B cell (primary cell): ENCODE measurements at regions of chr22 and their contacts with region 1.

Region 1: DNA sequence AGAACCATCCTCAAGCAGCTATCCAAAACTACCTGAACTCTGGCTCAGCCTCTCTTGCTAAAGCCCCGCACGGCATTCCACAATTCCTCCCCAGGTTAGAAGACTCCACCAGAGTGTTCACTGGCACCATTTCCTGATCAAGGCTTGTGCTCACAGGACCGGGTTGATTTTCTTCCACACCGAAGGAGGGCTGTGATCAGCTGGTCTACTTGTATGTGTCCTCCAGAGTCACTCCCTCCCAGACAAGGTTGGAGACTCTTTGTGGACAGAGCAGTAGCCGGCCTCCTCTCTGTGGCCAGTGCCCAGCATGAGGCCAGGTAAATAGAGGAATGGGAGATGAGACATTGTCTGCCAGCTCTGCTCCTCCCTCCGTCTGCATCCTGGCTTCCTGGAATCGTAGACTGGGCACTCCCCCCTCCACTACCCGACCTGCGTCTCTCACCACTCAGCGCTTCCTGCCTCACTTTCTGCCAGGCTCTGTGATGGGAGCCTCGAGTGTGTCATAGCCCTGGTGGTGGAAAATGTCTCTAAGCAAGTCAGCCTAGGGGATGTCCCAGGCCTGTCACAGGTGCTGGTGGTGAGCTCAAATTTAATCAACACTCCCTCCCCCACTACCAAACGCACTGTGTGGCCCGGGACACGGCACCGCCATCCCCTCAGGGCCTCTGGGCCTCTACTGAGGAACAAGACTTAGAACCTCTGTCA is 12.5 kb upstream of the TMPRSS6 start:
- DNase-seq: peak; percentile 88
- ATAC-seq: peak; percentile 92
- H3K4me3 ChIP-seq: peak overlapping the region in 1 of 5 experiments; percentile 33
- H3K4me3 Mint-ChIP-seq: peak overlapping the region; percentile 86
- H3K27ac ChIP-seq: peak overlapping the region; percentile 39 to 69
- H3K27ac Mint-ChIP-seq: peak overlapping the region; percentile 98
- H3K4me1 ChIP-seq: peaks cover 14 to 24% of the 10 kb centered on the region in 2 donors
- H3K4me1 Mint-ChIP-seq: peaks cover 29% of the 10 kb centered on the region
- H3K27me3 ChIP-seq: no peaks in the 10 kb centered on the region
- H3K27me3 Mint-ChIP-seq: no peaks in the 10 kb centered on the region
- CTCF ChIP-seq: peak; percentile 19

Region 2: GRCh38 chr22:36977947-36978660 is 143.9 kb before region 1 on chr22:
- CTCF ChIA-PET with region 1: no interaction called
- POLR2A ChIA-PET with region 1: no interaction called
- intact Hi-C with region 1: no loop called
- DNase-seq: peak; percentile 91
- ATAC-seq: peak; percentile 86
- H3K4me3 ChIP-seq: peak overlapping the region; percentile 55 to 93 (median 73)
- H3K4me3 Mint-ChIP-seq: peak overlapping the region; percentile 98
- H3K27ac ChIP-seq: peak overlapping the region; percentile 5 to 71
- H3K27ac Mint-ChIP-seq: peak overlapping the region; percentile 96
- H3K4me1 ChIP-seq: peaks cover 0 to 11% of the 10 kb centered on the region in 2 donors
- H3K4me1 Mint-ChIP-seq: peaks cover 9% of the 10 kb centered on the region
- H3K27me3 ChIP-seq: peaks cover 0 to 6% (median 0%) of the 10 kb centered on the region in 4 experiments
- H3K27me3 Mint-ChIP-seq: no peaks in the 10 kb centered on the region
- CTCF ChIP-seq: peak; percentile 81

Region 3: GRCh38 chr22:37077884-37078485 is 44.1 kb before region 1 on chr22:
- CTCF ChIA-PET with region 1: interaction called, 10 read pairs
- POLR2A ChIA-PET with region 1: no interaction called
- intact Hi-C with region 1: loop called (anchors 1 kb)
- DNase-seq: peak; percentile 75
- ATAC-seq: peak; percentile 62
- H3K4me3 ChIP-seq: no peak overlapping the region
- H3K4me3 Mint-ChIP-seq: no peak overlapping the region
- H3K27ac ChIP-seq: no peak overlapping the region
- H3K27ac Mint-ChIP-seq: peak overlapping the region; percentile 39
- H3K4me1 ChIP-seq: peaks cover 4 to 15% of the 10 kb centered on the region in 2 donors
- H3K4me1 Mint-ChIP-seq: peaks cover 22% of the 10 kb centered on the region
- H3K27me3 ChIP-seq: peaks cover 0 to 21% (median 2%) of the 10 kb centered on the region in 4 experiments
- H3K27me3 Mint-ChIP-seq: peaks cover 18% of the 10 kb centered on the region
- CTCF ChIP-seq: peak; percentile 96

Region 4: DNA sequence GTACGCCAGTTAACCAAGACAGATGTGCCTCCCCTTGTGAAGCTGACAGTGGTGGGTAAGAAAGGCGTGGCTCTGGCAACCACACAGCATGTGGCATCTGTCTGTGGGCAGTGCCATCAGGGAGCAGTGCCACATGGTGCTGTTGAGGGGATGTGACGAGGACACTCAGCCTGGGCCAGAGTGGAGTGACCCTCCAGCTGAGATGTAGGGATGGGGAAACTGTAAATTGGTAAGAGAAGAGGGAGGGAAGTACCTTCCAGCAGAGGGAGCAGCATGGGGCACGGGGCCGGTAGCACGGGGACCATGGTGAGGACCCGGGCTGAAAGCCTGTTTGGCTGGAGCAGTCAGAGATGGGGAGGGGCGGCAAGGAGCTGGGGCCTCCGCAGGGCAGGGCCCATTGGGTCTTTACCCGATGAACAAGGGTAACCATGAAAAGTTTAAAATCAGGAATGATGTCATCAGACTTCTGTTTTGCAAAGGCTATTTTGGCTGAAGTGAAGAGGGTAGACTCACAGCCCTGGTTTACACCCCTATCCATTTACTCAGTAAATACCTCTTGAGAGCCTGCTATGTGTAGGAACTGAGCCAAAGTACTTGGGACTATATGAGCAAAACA is 23.0 kb before region 1 on chr22:
- CTCF ChIA-PET with region 1: interaction called, 11 read pairs
- POLR2A ChIA-PET with region 1: no interaction called
- intact Hi-C with region 1: no loop called
- DNase-seq: no peak
- ATAC-seq: no peak
- H3K4me3 ChIP-seq: no peak overlapping the region
- H3K4me3 Mint-ChIP-seq: no peak overlapping the region
- H3K27ac ChIP-seq: no peak overlapping the region
- H3K27ac Mint-ChIP-seq: no peak overlapping the region
- H3K4me1 ChIP-seq: no peaks in the 10 kb centered on the region
- H3K4me1 Mint-ChIP-seq: peaks cover 7% of the 10 kb centered on the region
- H3K27me3 ChIP-seq: peaks cover 0 to 22% (median 6%) of the 10 kb centered on the region in 4 experiments
- H3K27me3 Mint-ChIP-seq: peaks cover 39% of the 10 kb centered on the region
- CTCF ChIP-seq: no peak

Region 5: GRCh38 chr22:37166675-37167066 is 44.6 kb after region 1 on chr22:
- CTCF ChIA-PET with region 1: interaction called, 10 read pairs
- POLR2A ChIA-PET with region 1: interaction called, 3 read pairs
- intact Hi-C with region 1: loop called (anchors 1 kb)
- DNase-seq: peak; percentile 84
- ATAC-seq: peak; percentile 59
- H3K4me3 ChIP-seq: no peak overlapping the region
- H3K4me3 Mint-ChIP-seq: peak overlapping the region; percentile 57
- H3K27ac ChIP-seq: no peak overlapping the region
- H3K27ac Mint-ChIP-seq: peak overlapping the region; percentile 47
- H3K4me1 ChIP-seq: peaks cover 17 to 46% of the 10 kb centered on the region in 2 donors
- H3K4me1 Mint-ChIP-seq: peaks cover 40% of the 10 kb centered on the region
- H3K27me3 ChIP-seq: no peaks in the 10 kb centered on the region
- H3K27me3 Mint-ChIP-seq: peaks cover 4% of the 10 kb centered on the region
- CTCF ChIP-seq: peak; percentile 92

Region 6: DNA sequence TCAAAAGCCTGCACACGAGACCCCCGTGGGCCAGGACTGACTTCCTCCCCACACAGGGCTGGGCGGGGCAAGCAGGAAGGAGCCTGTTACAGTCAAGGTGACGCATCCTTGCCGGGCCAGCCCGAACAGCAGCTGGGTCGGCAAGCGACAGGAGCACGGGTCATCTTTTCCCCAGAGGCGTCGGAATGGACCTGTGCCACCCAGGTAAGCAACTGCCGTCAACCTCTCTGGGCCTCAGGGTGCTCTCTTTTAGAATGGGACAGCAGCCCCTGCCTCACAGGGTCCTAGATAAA is 160.3 kb after region 1 on chr22 and contains the start of gene CYTH4:
- CTCF ChIA-PET with region 1: no interaction called
- POLR2A ChIA-PET with region 1: no interaction called
- intact Hi-C with region 1: loop called (anchors 1 kb)
- DNase-seq: peak; percentile 82
- ATAC-seq: peak; percentile 58
- H3K4me3 ChIP-seq: peak within 1 kb of the TSS; percentile 82 to 100 (median 99)
- H3K4me3 Mint-ChIP-seq: peak within 1 kb of the TSS; percentile 89
- H3K27ac ChIP-seq: peak within 1 kb of the TSS; percentile 79 to 83
- H3K27ac Mint-ChIP-seq: peak within 1 kb of the TSS; percentile 97
- H3K4me1 ChIP-seq: peaks cover 36 to 73% of the 10 kb centered on the region in 2 donors
- H3K4me1 Mint-ChIP-seq: peaks cover 81% of the 10 kb centered on the region
- H3K27me3 ChIP-seq: no peaks in the 10 kb centered on the region
- H3K27me3 Mint-ChIP-seq: no peaks in the 10 kb centered on the region
- CTCF ChIP-seq: no peak
- total RNA-seq, gene CYTH4: 92.2 and 98.0 TPM in 2 replicates